ENCODE measurements at regions of chr7 and their contacts with region 1.

Region 1: GRCh38 chr7:34823640-34824258 is 165.7 kb downstream of the NPSR1 start:
- DNase-seq: peak; percentile 56
- ATAC-seq: peak; percentile 56 to 82; a peak in 4 of 6 replicates
- H3K4me3 ChIP-seq: no peak overlapping the region
- H3K27ac ChIP-seq: 0 out of 6 replicates have a peak overlapping the region, but pooled peaks have one; percentile 7 to 37
- H3K4me1 ChIP-seq: peaks cover 5% of the 10 kb centered on the region; the same call in 1 of the 3 replicates
- CTCF ChIP-seq: peak; percentile 87
- EP300 ChIP-seq: no peak
- POLR2A ChIP-seq: no peak
- RAD21 ChIP-seq: peak; percentile 85 to 91

Region 2: DNA sequence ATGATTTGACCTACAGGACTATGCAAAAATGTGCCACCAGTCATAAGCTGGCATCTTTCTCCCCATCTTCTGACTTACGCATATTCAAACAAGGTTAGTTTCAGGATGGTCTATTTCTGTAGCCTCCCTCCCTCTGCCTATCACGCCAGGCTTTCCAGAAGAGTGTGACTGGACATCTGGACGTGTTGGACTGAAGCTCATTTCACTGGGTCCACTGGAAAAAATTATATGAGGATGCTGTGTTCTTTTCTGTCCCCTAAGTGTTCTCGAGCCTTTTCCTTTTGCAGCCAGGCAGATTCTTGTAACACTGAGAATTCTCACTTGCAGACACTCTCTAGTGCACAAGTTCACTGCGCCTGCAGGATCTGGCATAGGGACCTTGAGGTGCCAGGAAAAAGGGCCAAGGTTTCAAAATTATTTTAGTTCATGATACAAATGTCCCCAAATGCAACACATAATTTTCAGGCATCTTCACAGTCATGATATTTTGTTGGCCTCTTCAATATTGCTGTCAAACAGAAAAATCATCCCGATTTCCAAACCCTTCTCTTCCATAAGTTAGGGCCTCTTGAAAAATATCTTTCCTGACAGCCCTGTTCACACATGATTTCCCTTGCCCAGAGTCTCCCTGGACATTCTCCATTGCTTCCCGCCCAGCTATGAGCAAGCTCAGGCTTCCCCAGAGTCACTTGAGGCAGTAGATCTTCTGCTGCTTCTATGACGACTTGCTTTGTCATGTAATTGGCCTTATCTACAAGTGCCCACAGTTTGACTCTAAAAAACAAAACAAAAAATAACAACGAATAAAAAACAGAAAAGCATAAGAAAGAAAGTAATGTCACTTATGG is 748.0 kb before region 1 on chr7:
- CTCF ChIA-PET with region 1: no interaction called
- POLR2A ChIA-PET with region 1: no interaction called
- DNase-seq: no peak
- ATAC-seq: no peak
- H3K4me3 ChIP-seq: no peak overlapping the region
- H3K27ac ChIP-seq: peak overlapping the region in 1 of 2 experiments; percentile 64; a peak in 4 of 6 replicates
- H3K4me1 ChIP-seq: peaks cover 22% of the 10 kb centered on the region
- CTCF ChIP-seq: no peak
- EP300 ChIP-seq: no peak
- POLR2A ChIP-seq: no peak
- RAD21 ChIP-seq: no peak

Region 3: DNA sequence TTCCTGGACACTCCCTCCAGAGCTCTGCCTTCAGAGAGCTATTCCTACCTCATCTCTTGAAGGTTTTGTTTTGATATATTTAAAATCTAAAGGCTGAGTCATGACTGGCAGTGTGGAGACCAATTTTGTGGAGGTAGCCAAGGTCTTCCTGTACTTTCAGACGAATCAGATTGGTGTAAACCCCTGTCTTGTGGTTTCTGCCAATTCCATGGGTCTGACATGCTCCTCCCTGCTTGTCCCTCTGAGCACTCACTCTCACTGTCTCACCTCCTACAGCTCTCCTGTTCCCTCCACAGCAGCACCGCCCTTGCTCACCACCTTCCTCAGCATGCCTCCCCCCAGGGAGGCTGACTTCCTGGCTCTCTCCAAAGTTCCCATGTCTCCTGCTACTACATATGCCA is 14.1 kb after region 1 on chr7:
- CTCF ChIA-PET with region 1: interaction called, 32 read pairs
- POLR2A ChIA-PET with region 1: no interaction called
- DNase-seq: peak in 1 of 2 experiments; percentile 13
- ATAC-seq: peak in 1 of 2 experiments; percentile 46; a peak in 3 of 6 replicates
- H3K4me3 ChIP-seq: no peak overlapping the region
- H3K27ac ChIP-seq: peak overlapping the region; percentile 15 to 67; a peak in 3 of 6 replicates
- H3K4me1 ChIP-seq: peaks cover 14% of the 10 kb centered on the region
- CTCF ChIP-seq: no peak
- EP300 ChIP-seq: no peak
- POLR2A ChIP-seq: no peak
- RAD21 ChIP-seq: no peak

Region 4: DNA sequence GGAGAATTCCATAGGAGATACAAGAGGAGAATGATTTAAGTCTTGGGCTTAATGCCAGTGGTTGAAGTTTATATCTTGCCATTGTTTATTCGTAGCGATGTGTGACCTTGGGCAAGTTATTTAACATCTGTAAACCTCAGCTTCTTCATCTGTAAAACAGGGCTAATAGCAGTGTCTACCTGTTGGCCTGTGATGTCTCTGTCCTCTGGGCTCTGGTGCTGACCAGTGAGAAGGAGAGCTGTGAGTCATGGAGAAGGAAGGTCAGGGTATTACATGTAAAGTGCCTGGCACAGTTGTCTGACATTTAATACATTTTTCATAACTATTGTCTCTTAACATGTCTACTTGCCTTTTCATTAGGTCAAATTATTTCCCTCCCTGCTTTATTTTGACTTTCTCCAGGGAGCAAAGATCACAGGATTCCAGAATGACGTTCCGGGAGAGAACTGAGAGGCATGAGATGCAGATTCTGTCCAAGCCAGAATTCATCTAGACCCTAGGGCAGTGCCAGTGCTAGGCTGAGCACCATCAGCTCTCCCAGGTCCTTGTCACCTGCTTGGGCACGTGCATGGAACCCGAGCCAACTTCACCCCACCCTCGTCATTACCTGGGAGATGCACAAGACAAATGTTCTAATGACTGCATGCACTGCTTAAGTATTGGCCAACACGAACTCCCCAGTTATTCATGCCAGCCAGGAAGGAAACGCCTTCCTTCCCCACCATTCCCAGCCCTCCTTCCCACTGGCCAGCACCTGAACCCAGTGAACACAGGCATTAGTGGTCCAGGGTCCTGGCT is 25.6 kb after region 1 on chr7:
- CTCF ChIA-PET with region 1: interaction called, 10 read pairs
- POLR2A ChIA-PET with region 1: interaction called, 4 read pairs
- DNase-seq: peak; percentile 27 to 31
- ATAC-seq: peak; percentile 68 to 77; a peak in 5 of 6 replicates
- H3K4me3 ChIP-seq: no peak overlapping the region
- H3K27ac ChIP-seq: peak overlapping the region in 1 of 2 experiments; percentile 54; a peak in 3 of 6 replicates
- H3K4me1 ChIP-seq: peaks cover 34% of the 10 kb centered on the region
- CTCF ChIP-seq: no peak
- EP300 ChIP-seq: no peak
- POLR2A ChIP-seq: no peak
- RAD21 ChIP-seq: no peak

Region 5: GRCh38 chr7:35037526-35038339 is 214.0 kb after region 1 on chr7:
- CTCF ChIA-PET with region 1: interaction called, 11 read pairs
- POLR2A ChIA-PET with region 1: no interaction called
- DNase-seq: peak; percentile 75 to 93
- ATAC-seq: peak; percentile 87 to 90
- H3K4me3 ChIP-seq: peak overlapping the region; percentile 69
- H3K27ac ChIP-seq: peak overlapping the region; percentile 95 to 96
- H3K4me1 ChIP-seq: peaks cover 29% of the 10 kb centered on the region
- CTCF ChIP-seq: peak; percentile 93
- EP300 ChIP-seq: no peak
- POLR2A ChIP-seq: peak; percentile 72
- RAD21 ChIP-seq: peak; percentile 53 to 80

Measured in A549 (cell line).